Activated CD4-positive, alpha-beta memory T cell treated with anti-CD3 and anti-CD28 coated beads for 36 hours (primary cell): ENCODE measurements at regions of chr16 and their contacts with region 1.

Region 1: GRCh38 chr16:87877938-87878507 is 8.7 kb upstream of the SLC7A5 start:
- DNase-seq: peak; percentile 68
- H3K4me3 Mint-ChIP-seq: no peak overlapping the region
- H3K27ac Mint-ChIP-seq: no peak overlapping the region
- H3K4me1 Mint-ChIP-seq: peaks cover 39% of the 10 kb centered on the region
- H3K27me3 Mint-ChIP-seq: peaks cover 2% of the 10 kb centered on the region

Region 2: DNA sequence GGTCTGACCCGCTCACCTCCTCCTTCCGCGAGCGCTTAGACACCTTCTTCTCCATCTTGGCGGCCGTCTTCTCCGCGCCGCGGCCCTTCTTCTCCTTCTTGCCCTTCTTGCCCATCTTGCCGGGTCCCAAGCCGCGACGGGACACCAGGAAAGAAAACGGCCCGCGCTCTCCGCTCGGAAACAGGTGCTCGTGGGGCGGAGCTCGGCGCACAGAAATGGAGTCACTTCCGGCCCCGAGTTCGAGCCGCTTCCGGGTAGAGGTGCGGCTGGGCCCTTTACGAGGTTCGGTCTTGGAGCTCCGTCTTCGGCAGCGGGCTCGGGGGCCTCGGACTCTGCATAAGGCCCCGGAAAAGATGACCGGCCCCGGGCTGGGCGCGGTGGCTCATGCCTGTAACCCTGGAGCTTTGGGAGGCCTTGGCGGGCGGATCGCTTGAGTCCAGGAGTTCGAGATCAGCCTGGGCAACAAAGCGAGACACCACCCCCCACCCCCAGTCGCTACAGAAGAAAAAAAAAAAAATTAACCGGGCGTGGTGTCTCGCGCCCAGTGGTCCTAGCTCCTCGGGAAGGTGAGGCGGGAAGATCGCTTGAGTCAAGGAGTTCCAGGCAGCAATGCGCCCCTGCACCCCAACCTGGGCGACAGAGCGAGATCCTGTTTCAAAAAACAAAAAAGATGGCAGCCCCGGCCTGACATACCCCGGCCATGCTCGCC is 112.1 kb before region 1 on chr16 and contains the start of gene KLHDC4:
- CTCF ChIA-PET with region 1: interaction called, 29 read pairs
- POLR2A ChIA-PET with region 1: interaction called, 3 read pairs
- intact Hi-C with region 1: no loop called
- DNase-seq: peak; percentile 94
- H3K4me3 Mint-ChIP-seq: peak within 1 kb of the TSS; percentile 97
- H3K27ac Mint-ChIP-seq: peak within 1 kb of the TSS; percentile 92
- H3K4me1 Mint-ChIP-seq: peaks cover 38% of the 10 kb centered on the region
- H3K27me3 Mint-ChIP-seq: no peaks in the 10 kb centered on the region
- total RNA-seq, gene KLHDC4: 65.9 to 70.2 TPM

Region 3: DNA sequence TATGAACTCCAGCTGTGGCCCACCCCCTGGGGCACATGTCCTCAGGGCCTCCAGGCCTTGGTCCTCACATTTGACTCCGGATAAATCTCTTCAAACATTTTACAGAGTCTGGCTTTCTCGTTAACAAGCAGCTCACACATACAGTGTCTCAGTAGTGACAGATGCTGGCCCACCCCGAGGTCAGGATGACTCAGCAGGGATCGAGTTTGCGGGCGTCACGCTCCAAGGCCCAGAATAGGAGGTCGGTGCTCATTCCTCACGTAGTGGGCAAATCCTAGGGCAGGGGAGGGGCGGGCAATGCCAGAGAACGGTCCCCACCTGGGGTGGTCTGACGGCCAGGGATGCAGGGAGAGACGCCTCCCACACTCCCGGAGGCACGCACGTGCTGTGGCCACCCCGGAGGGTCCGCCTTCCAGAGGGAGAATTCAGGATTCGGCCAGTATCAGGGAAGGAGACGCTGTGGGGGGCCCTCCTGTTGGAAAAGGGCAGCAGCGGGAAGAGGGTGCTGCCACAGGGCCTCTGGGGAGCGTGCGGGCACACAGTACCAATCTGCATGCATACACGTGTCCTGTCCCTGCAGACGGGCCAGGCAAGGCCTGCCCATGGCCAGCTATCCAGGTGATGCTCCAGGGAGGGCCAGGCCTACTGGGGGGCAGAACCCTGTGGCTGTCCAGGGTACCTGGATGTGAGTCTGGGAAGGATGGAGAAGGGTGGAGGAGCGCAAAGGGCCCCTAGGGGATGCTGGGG is 17.3 kb before region 1 on chr16:
- CTCF ChIA-PET with region 1: interaction called, 224 read pairs
- POLR2A ChIA-PET with region 1: interaction called, 11 read pairs
- intact Hi-C with region 1: no loop called
- DNase-seq: peak; percentile 39
- H3K4me3 Mint-ChIP-seq: peak overlapping the region; percentile 56
- H3K27ac Mint-ChIP-seq: peak overlapping the region; percentile 81
- H3K4me1 Mint-ChIP-seq: peaks cover 80% of the 10 kb centered on the region
- H3K27me3 Mint-ChIP-seq: no peaks in the 10 kb centered on the region

Region 4: DNA sequence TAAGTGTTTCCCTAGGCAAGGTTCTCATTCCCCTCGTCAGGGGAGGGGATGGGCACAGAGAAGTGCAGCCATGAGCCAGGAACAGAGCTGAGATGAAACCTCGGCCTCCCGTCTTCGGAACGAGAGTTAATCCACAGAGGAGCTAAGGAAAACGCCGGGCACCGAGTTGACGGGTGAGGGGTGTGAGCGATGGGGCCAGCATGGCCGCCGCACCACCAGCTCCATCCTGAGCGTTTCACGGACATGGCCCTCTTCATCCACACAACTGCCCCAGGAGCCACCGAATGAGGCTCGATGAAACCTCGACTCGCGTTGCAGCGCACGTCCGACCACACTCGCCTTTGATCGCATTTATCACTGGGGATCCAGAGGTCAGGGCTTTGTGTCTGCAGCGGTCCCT is 36.8 kb after region 1 on chr16:
- CTCF ChIA-PET with region 1: interaction called, 31 read pairs
- POLR2A ChIA-PET with region 1: no interaction called
- intact Hi-C with region 1: no loop called
- DNase-seq: no peak
- H3K4me3 Mint-ChIP-seq: no peak overlapping the region
- H3K27ac Mint-ChIP-seq: no peak overlapping the region
- H3K4me1 Mint-ChIP-seq: no peaks in the 10 kb centered on the region
- H3K27me3 Mint-ChIP-seq: peaks cover 12% of the 10 kb centered on the region

Region 5: GRCh38 chr16:87925299-87925670 is 47.3 kb after region 1 on chr16:
- CTCF ChIA-PET with region 1: no interaction called
- POLR2A ChIA-PET with region 1: no interaction called
- intact Hi-C with region 1: no loop called
- DNase-seq: no peak
- H3K4me3 Mint-ChIP-seq: no peak overlapping the region
- H3K27ac Mint-ChIP-seq: no peak overlapping the region
- H3K4me1 Mint-ChIP-seq: peaks cover 6% of the 10 kb centered on the region
- H3K27me3 Mint-ChIP-seq: no peaks in the 10 kb centered on the region

Region 6: GRCh38 chr16:88084881-88085280 is 206.9 kb after region 1 on chr16:
- CTCF ChIA-PET with region 1: no interaction called
- POLR2A ChIA-PET with region 1: no interaction called
- intact Hi-C with region 1: no loop called
- DNase-seq: no peak
- H3K4me3 Mint-ChIP-seq: no peak overlapping the region
- H3K27ac Mint-ChIP-seq: no peak overlapping the region
- H3K4me1 Mint-ChIP-seq: no peaks in the 10 kb centered on the region
- H3K27me3 Mint-ChIP-seq: no peaks in the 10 kb centered on the region